H1 (cell line): ENCODE measurements at regions of chr3 and their contacts with region 1.

Region 1: GRCh38 chr3:37996785-37997301 is 6.3 kb downstream of the VILL start:
- DNase-seq: peak; percentile 50 to 95
- H3K4me3 ChIP-seq: no peak overlapping the region
- H3K27ac ChIP-seq: no peak overlapping the region
- H3K4me1 ChIP-seq: peaks cover 0 to 15% (median 8%) of the 10 kb centered on the region in 4 experiments; a peak in 6 of 7 replicates
- H3K27me3 ChIP-seq: peaks cover 0 to 16% (median 7%) of the 10 kb centered on the region in 4 experiments; a peak in 4 of 7 replicates
- CTCF ChIP-seq: peak in 2 of 3 experiments; percentile 75 to 100; a peak in 3 of 4 replicates
- EP300 ChIP-seq: no peak
- POLR2A ChIP-seq: no peak
- RAD21 ChIP-seq: peak; percentile 43 to 55

Region 2: DNA sequence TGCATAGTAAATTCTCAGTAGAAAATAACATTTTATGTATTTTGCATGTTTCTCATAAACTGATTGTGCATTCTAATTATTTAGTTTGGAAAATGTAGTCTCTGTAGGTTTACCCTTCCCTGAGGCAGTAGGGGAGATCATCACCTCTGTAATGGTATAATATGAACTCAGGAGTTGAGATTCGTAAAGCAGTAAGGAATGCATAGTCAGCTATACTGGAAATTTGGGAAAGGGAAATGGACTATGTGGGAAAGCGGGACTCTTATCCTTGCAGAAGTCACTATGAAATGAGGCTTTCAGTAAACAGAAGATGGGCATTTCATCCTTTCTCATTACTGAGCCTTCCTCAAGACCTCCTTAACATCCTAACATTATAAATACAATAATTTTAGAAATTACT is 397.1 kb before region 1 on chr3:
- CTCF ChIA-PET with region 1: no interaction called
- POLR2A ChIA-PET with region 1: no interaction called
- DNase-seq: no peak
- H3K4me3 ChIP-seq: no peak overlapping the region
- H3K27ac ChIP-seq: no peak overlapping the region
- H3K4me1 ChIP-seq: no peaks in the 10 kb centered on the region; a peak in 1 of 7 replicates
- H3K27me3 ChIP-seq: no peaks in the 10 kb centered on the region
- CTCF ChIP-seq: no peak
- EP300 ChIP-seq: no peak
- POLR2A ChIP-seq: no peak
- RAD21 ChIP-seq: no peak

Region 3: GRCh38 chr3:37937156-37937555 is 59.7 kb before region 1 on chr3:
- CTCF ChIA-PET with region 1: no interaction called
- POLR2A ChIA-PET with region 1: no interaction called
- DNase-seq: no peak
- H3K4me3 ChIP-seq: no peak overlapping the region
- H3K27ac ChIP-seq: no peak overlapping the region
- H3K4me1 ChIP-seq: peaks cover 0 to 4% (median 1%) of the 10 kb centered on the region in 4 experiments; a peak in 2 of 7 replicates
- H3K27me3 ChIP-seq: no peaks in the 10 kb centered on the region
- CTCF ChIP-seq: no peak
- EP300 ChIP-seq: no peak
- POLR2A ChIP-seq: no peak
- RAD21 ChIP-seq: no peak

Region 4: GRCh38 chr3:37986479-37987314 is 10.1 kb before region 1 on chr3:
- CTCF ChIA-PET with region 1: interaction called, 34 read pairs
- POLR2A ChIA-PET with region 1: interaction called, 5 read pairs
- DNase-seq: no peak
- H3K4me3 ChIP-seq: no peak overlapping the region
- H3K27ac ChIP-seq: no peak overlapping the region
- H3K4me1 ChIP-seq: peaks cover 0 to 9% (median 6%) of the 10 kb centered on the region in 4 experiments; a peak in 5 of 7 replicates
- H3K27me3 ChIP-seq: peaks cover 0 to 2% (median 0%) of the 10 kb centered on the region in 4 experiments; a peak in 2 of 7 replicates
- CTCF ChIP-seq: no peak
- EP300 ChIP-seq: no peak
- POLR2A ChIP-seq: no peak
- RAD21 ChIP-seq: no peak

Region 5: DNA sequence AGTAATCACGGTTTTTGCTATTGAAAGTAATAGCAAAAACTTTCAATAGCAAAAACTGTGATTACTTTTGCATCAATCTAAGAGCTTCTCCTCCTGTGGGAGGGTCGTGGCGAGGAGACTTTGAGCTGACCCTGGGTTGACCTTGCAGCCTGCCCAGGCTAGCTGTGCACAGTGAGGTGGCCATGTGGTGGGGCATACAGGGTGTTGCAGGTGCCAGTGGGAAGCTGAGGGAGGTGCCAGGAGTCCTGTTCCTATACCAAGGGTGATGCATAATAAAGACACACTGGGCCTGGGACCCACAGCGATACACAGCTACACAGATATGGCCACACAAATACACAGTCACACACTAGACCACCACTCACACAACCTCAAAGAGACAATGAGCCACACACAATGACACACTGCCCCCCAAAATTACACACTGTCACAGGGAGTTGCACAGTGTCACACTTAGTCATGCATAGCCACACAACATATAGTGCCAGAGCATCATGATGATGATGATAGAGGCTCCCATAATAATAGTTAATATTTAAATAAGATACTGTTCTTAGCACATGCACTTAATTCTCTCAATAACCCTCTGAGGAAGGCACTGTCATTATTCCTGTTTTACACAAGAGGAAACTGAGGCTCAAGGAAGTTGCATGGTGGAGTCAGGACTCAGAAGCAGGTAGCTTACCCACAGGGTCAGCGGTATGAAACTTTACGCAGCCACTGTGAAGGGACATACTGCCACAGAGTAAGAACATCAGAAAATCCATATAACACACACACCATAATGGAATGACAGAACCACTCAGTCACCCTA is 26.3 kb after region 1 on chr3:
- CTCF ChIA-PET with region 1: interaction called, 74 read pairs
- POLR2A ChIA-PET with region 1: no interaction called
- DNase-seq: no peak
- H3K4me3 ChIP-seq: peak overlapping the region in 2 of 4 experiments; percentile 63 to 77; a peak in 1 of 8 replicates
- H3K27ac ChIP-seq: no peak overlapping the region
- H3K4me1 ChIP-seq: peaks cover 0 to 6% (median 2%) of the 10 kb centered on the region in 4 experiments; a peak in 4 of 7 replicates
- H3K27me3 ChIP-seq: peaks cover 9 to 26% (median 23%) of the 10 kb centered on the region in 4 experiments
- CTCF ChIP-seq: no peak
- EP300 ChIP-seq: no peak
- POLR2A ChIP-seq: no peak
- RAD21 ChIP-seq: no peak

Region 6: GRCh38 chr3:38095669-38096483 is 99.0 kb after region 1 on chr3:
- CTCF ChIA-PET with region 1: interaction called, 10 read pairs
- POLR2A ChIA-PET with region 1: no interaction called
- DNase-seq: no peak
- H3K4me3 ChIP-seq: no peak overlapping the region
- H3K27ac ChIP-seq: no peak overlapping the region
- H3K4me1 ChIP-seq: peaks cover 3 to 13% (median 4%) of the 10 kb centered on the region in 4 experiments; a peak in 6 of 7 replicates
- H3K27me3 ChIP-seq: peaks cover 0 to 2% (median 0%) of the 10 kb centered on the region in 4 experiments; a peak in 1 of 7 replicates
- CTCF ChIP-seq: no peak
- EP300 ChIP-seq: no peak
- POLR2A ChIP-seq: no peak
- RAD21 ChIP-seq: no peak; a peak in 1 of 4 replicates

Region 7: GRCh38 chr3:38164966-38165680 is 168.3 kb after region 1 on chr3 and contains the start of gene OXSR1:
- CTCF ChIA-PET with region 1: no interaction called
- POLR2A ChIA-PET with region 1: no interaction called
- DNase-seq: peak; percentile 92 to 98
- H3K4me3 ChIP-seq: peak within 1 kb of the TSS; percentile 75 to 90 (median 86)
- H3K27ac ChIP-seq: peak within 1 kb of the TSS; percentile 99
- H3K4me1 ChIP-seq: peaks cover 0 to 2% (median 0%) of the 10 kb centered on the region in 4 experiments; a peak in 3 of 7 replicates
- H3K27me3 ChIP-seq: no peaks in the 10 kb centered on the region
- CTCF ChIP-seq: no peak
- EP300 ChIP-seq: no peak
- POLR2A ChIP-seq: peak; percentile 77
- RAD21 ChIP-seq: no peak
- total RNA-seq, gene OXSR1: 45.5 and 47.0 TPM in 2 replicates

Region 8: DNA sequence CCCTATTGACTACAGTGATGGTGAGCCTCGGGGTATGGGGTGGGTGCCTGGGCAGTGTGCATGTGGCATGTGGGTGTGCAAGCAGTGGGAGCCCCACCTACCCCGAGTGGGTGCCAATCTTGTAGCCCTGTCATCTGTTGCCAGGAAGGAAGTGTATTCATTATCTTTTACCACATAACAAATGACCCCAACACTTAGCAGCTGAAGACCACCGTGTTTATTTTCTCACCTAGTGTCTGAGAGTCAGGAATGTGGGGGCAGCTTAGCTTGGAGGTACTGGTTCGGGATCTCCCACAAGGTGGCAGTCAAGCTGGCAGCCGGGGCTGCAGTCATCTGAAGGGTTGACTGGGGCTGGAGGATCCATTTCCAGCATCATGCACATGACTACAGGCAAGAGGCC is 371.4 kb after region 1 on chr3:
- CTCF ChIA-PET with region 1: no interaction called
- POLR2A ChIA-PET with region 1: no interaction called
- DNase-seq: no peak
- H3K4me3 ChIP-seq: no peak overlapping the region
- H3K27ac ChIP-seq: no peak overlapping the region
- H3K4me1 ChIP-seq: no peaks in the 10 kb centered on the region; a peak in 1 of 7 replicates
- H3K27me3 ChIP-seq: no peaks in the 10 kb centered on the region
- CTCF ChIP-seq: peak; percentile 5 to 30 (median 16); a peak in 3 of 4 replicates
- EP300 ChIP-seq: no peak
- POLR2A ChIP-seq: no peak
- RAD21 ChIP-seq: peak; percentile 4 to 32; a peak in 2 of 4 replicates